ENCODE measurements at regions of chr14 and their contacts with region 1.

Region 1: GRCh38 chr14:88013750-88014349 is 8.9 kb downstream of the GPR65 start:
- DNase-seq: no peak
- H3K4me3 Mint-ChIP-seq: no peak overlapping the region
- H3K27ac Mint-ChIP-seq: no peak overlapping the region
- H3K4me1 Mint-ChIP-seq: peaks cover 65% of the 10 kb centered on the region
- H3K27me3 Mint-ChIP-seq: no peaks in the 10 kb centered on the region

Region 2: DNA sequence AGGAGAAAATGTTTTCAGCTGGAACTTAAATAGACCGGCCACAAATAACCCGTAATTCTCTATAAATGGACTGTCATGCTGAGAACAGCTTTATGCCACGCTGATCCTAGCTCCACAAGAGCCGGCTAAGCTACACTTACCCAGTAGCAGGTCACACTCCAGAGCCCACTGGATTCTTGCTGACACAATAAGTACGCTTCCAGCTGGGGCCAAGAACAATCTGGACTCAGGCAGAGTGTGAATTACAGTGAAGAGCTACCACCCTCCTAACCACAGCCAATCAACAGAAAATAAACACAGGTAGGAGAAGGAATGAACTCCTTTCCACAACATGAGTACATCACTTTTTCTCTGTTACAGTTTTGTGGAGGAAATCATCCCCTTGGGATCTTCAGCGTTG is 552.1 kb before region 1 on chr14:
- intact Hi-C with region 1: no loop called
- DNase-seq: no peak
- H3K4me3 Mint-ChIP-seq: no peak overlapping the region
- H3K27ac Mint-ChIP-seq: no peak overlapping the region
- H3K4me1 Mint-ChIP-seq: no peaks in the 10 kb centered on the region
- H3K27me3 Mint-ChIP-seq: no peaks in the 10 kb centered on the region

Region 3: GRCh38 chr14:87971010-87971409 is 42.8 kb before region 1 on chr14:
- intact Hi-C with region 1: no loop called
- DNase-seq: no peak
- H3K4me3 Mint-ChIP-seq: no peak overlapping the region
- H3K27ac Mint-ChIP-seq: no peak overlapping the region
- H3K4me1 Mint-ChIP-seq: no peaks in the 10 kb centered on the region
- H3K27me3 Mint-ChIP-seq: no peaks in the 10 kb centered on the region

Region 4: GRCh38 chr14:87992718-87993628 is 20.9 kb before region 1 on chr14 and contains the start of gene GALC:
- intact Hi-C with region 1: no loop called
- DNase-seq: peak; percentile 93
- H3K4me3 Mint-ChIP-seq: peak within 1 kb of the TSS; percentile 92
- H3K27ac Mint-ChIP-seq: peak within 1 kb of the TSS; percentile 98
- H3K4me1 Mint-ChIP-seq: peaks cover 55% of the 10 kb centered on the region
- H3K27me3 Mint-ChIP-seq: no peaks in the 10 kb centered on the region
- total RNA-seq, gene GALC: 8.6 and 8.7 TPM in 2 replicates

Region 5: DNA sequence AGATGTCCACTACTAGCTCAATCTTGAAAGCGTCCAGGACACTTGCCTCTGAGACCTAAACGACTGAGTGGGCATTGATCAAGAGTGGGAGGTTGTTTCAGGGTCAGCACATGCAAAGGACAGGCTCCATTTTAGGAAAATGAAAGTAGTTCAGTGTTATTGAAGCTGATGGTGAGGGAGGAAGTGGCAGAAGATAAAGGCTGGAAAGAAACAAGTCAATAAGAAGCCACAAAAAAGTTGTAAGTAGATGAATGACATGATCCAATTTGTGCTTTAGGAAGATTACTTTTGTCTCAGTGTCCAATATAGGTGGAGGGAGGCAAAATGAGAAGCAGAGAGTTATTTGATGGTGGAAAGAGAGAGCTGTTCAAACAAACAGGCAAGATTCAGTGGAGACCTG is 13.0 kb after region 1 on chr14:
- intact Hi-C with region 1: no loop called
- DNase-seq: no peak
- H3K4me3 Mint-ChIP-seq: peak overlapping the region; percentile 53
- H3K27ac Mint-ChIP-seq: peak overlapping the region; percentile 85
- H3K4me1 Mint-ChIP-seq: peaks cover 82% of the 10 kb centered on the region
- H3K27me3 Mint-ChIP-seq: no peaks in the 10 kb centered on the region

Region 6: GRCh38 chr14:88168498-88169165 is 154.8 kb after region 1 on chr14:
- intact Hi-C with region 1: loop called (anchors 1 kb)
- DNase-seq: peak; percentile 29
- H3K4me3 Mint-ChIP-seq: no peak overlapping the region
- H3K27ac Mint-ChIP-seq: no peak overlapping the region
- H3K4me1 Mint-ChIP-seq: peaks cover 16% of the 10 kb centered on the region
- H3K27me3 Mint-ChIP-seq: peaks cover 28% of the 10 kb centered on the region

Measured in activated T-helper 1 cell treated with anti-CD3 and anti-CD28 coated beads, Interleukin-12 subunit alpha, Interleukin-12 subunit beta, Interleukin-2, Interleukin-4 antibody, amounts not matched to agents 30 ng/mL and 10 ng/mL and 1 ng/mL, durations not matched to agents 14 hours and 24 hours and 36 hours (primary cell).